PC-3 (cell line): ENCODE measurements at regions of chrX and their contacts with region 1.

Region 1: GRCh38 chrX:10119399-10119990 is 37.3 kb upstream of the CLCN4 start:
- DNase-seq: peak; percentile 73
- ATAC-seq: no peak; the same call in 1 of the 2 replicates
- H3K4me3 ChIP-seq: peak overlapping the region; percentile 3; the same call in 1 of the 2 replicates
- H3K27ac ChIP-seq: no peak overlapping the region
- H3K4me1 ChIP-seq: no peaks in the 10 kb centered on the region
- H3K27me3 ChIP-seq: no peaks in the 10 kb centered on the region
- CTCF ChIP-seq: peak; percentile 100

Region 2: DNA sequence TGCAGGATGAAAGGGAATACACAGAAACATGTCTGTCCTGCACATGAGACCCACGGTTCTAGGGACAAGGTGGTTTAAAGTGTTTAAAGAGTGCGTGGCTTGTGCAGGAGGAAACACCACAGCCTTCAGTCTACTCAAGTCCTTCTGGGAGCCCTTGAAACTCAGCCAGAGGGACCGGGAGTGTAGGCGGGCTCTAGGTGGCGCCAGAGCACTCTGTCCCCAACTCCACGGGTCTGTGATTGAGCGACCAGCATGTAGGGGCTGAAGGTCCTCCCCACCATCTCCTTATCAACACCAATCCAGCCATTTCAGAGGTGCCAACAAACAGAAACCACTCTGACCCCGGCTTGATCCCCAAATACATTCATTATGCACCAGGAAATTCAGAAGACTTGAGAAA is 234.3 kb before region 1 on chrX:
- CTCF ChIA-PET with region 1: no interaction called
- POLR2A ChIA-PET with region 1: no interaction called
- intact Hi-C with region 1: loop called (anchors 1 kb)
- DNase-seq: peak; percentile 74
- ATAC-seq: peak; percentile 79
- H3K4me3 ChIP-seq: no peak overlapping the region
- H3K27ac ChIP-seq: no peak overlapping the region
- H3K4me1 ChIP-seq: peaks cover 4% of the 10 kb centered on the region
- H3K27me3 ChIP-seq: no peaks in the 10 kb centered on the region
- CTCF ChIP-seq: peak; percentile 80

Region 3: DNA sequence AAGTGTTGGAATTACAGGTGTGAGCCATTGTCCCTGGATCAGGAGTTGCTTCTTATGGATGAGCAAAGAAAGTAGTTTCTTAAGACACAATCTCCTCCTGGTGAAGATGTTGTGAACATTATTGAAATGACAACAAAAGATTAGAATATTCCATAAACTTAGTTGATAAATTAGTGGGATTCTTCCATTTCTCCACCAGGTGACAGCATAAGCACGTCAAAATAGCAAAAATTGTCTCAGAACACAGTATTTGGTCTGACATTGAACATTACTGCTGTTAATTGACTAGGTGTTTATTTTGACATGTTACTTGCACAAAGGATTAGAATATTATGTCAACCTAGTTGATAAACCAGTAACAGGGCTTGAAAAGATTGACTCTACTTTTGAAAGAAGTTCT is 130.7 kb before region 1 on chrX:
- CTCF ChIA-PET with region 1: no interaction called
- POLR2A ChIA-PET with region 1: no interaction called
- intact Hi-C with region 1: loop called (anchors 1 kb)
- DNase-seq: peak; percentile 59
- ATAC-seq: peak; percentile 24; the same call in 1 of the 2 replicates
- H3K4me3 ChIP-seq: no peak overlapping the region
- H3K27ac ChIP-seq: no peak overlapping the region
- H3K4me1 ChIP-seq: no peaks in the 10 kb centered on the region
- H3K27me3 ChIP-seq: no peaks in the 10 kb centered on the region
- CTCF ChIP-seq: peak; percentile 74

Region 4: DNA sequence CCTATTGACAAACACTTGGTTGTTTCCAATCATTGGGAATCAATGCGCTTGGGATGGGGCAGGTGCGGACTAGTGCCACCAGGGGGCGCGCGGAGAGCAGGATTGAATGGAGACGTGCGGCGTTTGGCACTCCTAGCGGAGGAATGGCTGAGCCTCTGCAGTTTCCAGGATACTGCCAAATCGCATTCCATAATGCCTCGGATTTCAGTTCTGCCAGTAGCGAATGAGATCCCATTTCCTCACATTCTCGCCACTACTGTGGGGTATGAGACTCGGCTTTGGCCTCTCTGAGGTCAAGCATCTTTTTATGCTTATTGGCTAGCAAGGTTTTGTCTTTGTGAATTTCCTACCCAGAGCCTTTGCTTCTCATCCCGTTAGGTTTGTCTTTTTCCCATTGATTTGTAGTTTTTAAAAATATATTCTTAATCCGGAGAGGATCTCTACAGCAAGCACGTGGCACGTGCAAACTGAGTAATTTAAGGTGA is 123.6 kb before region 1 on chrX:
- CTCF ChIA-PET with region 1: no interaction called
- POLR2A ChIA-PET with region 1: no interaction called
- intact Hi-C with region 1: loop called (anchors 1 kb)
- DNase-seq: peak; percentile 74
- ATAC-seq: peak; percentile 64
- H3K4me3 ChIP-seq: no peak overlapping the region
- H3K27ac ChIP-seq: no peak overlapping the region
- H3K4me1 ChIP-seq: no peaks in the 10 kb centered on the region
- H3K27me3 ChIP-seq: no peaks in the 10 kb centered on the region
- CTCF ChIP-seq: peak; percentile 88

Region 5: DNA sequence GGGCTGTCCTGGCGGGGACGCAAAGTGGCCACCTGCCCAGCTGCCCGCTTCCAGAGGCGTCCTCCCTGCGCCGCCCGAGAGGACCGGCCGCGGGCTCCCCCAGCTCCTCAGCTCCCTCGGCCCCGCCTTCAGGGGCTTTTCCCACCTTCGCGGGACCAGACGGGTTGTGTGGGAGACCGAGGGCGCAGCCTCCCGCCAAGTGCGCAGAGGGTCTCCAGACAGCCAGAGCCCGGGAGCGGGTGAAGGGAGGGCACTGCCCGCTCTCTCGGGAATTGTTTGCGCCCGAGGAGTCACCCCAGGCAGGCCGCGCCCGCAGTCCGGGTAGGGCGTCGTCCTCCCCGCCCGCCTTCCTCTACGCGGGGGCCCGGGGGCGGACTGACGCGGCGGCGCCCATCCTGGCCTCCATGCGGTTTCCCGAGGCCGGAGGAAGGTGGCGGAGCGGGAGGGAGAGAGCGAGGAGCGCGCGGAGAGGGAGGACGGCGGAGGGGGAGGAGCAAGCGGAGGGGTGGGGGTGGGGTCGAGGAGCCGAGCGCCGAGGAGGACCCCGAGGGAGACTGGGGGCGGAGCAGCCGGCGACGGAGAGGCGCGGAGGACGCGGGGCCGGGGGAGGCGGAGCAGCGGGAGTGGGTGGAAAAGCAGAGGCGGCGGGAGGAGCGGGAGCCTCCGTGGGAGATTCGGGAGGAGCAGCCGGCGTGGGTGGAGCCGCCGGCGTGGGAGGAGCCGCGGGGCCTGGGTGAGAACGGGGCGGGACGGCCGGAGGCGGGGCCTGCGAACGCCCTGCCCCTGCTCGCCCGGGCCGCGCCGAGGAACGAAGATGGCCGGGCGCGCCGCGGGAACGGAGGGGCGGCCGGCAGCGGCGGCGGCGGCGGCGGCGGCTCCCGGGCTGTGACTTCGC is 104.8 kb before region 1 on chrX:
- CTCF ChIA-PET with region 1: no interaction called
- POLR2A ChIA-PET with region 1: no interaction called
- intact Hi-C with region 1: loop called (anchors 5 kb)
- DNase-seq: peak; percentile 87
- ATAC-seq: peak; percentile 74
- H3K4me3 ChIP-seq: peak overlapping the region; percentile 76
- H3K27ac ChIP-seq: peak overlapping the region; percentile 70
- H3K4me1 ChIP-seq: peaks cover 28% of the 10 kb centered on the region
- H3K27me3 ChIP-seq: no peaks in the 10 kb centered on the region
- CTCF ChIP-seq: no peak

Region 6: GRCh38 chrX:10039821-10040793 is 79.4 kb before region 1 on chrX:
- CTCF ChIA-PET with region 1: no interaction called
- POLR2A ChIA-PET with region 1: no interaction called
- intact Hi-C with region 1: no loop called
- DNase-seq: peak; percentile 55
- ATAC-seq: peak; percentile 59
- H3K4me3 ChIP-seq: no peak overlapping the region
- H3K27ac ChIP-seq: no peak overlapping the region
- H3K4me1 ChIP-seq: peaks cover 8% of the 10 kb centered on the region; the same call in 1 of the 2 replicates
- H3K27me3 ChIP-seq: no peaks in the 10 kb centered on the region
- CTCF ChIP-seq: no peak

Region 7: DNA sequence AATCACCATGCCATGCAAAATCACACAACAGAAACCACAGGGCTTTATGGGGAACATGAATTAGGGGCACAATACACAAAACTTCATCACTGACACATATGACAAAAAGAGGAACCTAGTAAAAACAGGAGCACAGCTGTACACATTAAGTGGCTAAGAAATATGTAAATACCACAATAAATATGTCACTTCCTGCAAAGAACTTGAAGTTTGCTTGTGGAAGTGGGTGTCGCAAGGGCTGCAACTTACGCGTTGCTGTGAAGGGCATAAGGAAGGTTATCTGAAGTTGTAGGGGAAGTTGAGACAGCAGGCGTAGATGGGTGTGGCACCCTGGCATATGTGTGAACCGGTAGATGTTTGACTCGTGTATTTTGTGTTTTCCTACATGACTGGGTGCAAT is 79.7 kb after region 1 on chrX:
- CTCF ChIA-PET with region 1: no interaction called
- POLR2A ChIA-PET with region 1: no interaction called
- intact Hi-C with region 1: no loop called
- DNase-seq: no peak
- ATAC-seq: no peak
- H3K4me3 ChIP-seq: no peak overlapping the region
- H3K27ac ChIP-seq: no peak overlapping the region
- H3K4me1 ChIP-seq: no peaks in the 10 kb centered on the region
- H3K27me3 ChIP-seq: no peaks in the 10 kb centered on the region
- CTCF ChIP-seq: no peak

Region 8: DNA sequence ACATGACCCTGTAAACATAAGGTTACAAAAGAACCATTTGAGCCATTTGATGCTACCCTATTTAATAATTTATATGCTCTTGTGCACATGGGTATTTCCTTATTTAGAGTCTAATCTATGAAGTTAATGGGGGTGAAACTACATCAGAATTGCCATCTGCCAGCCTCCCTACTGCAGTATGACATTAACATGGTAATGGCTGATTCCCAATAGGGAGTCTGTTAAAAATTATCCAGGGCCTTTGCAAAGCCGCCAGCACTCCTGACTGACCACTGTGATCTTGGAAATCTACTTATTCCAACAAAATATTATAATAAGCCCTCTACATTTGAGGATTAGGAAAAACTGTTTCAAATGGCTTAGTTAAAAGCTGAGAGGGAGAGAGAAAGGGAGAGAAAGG is 191.0 kb after region 1 on chrX:
- CTCF ChIA-PET with region 1: no interaction called
- POLR2A ChIA-PET with region 1: no interaction called
- intact Hi-C with region 1: no loop called
- DNase-seq: no peak
- ATAC-seq: no peak
- H3K4me3 ChIP-seq: no peak overlapping the region
- H3K27ac ChIP-seq: no peak overlapping the region
- H3K4me1 ChIP-seq: no peaks in the 10 kb centered on the region
- H3K27me3 ChIP-seq: no peaks in the 10 kb centered on the region
- CTCF ChIP-seq: no peak